T-cell (primary cell): ENCODE measurements at regions of chr1 and their contacts with region 1.

Region 1: GRCh38 chr1:9784508-9785133 is 39.1 kb downstream of the CLSTN1 start:
- DNase-seq: peak; percentile 28 to 86 (median 60)
- ATAC-seq: peak in 3 of 4 experiments; percentile 21 to 56 (median 38)
- H3K4me3 ChIP-seq: no peak overlapping the region
- H3K4me3 Mint-ChIP-seq: no peak overlapping the region
- H3K27ac ChIP-seq: no peak overlapping the region
- H3K27ac Mint-ChIP-seq: peak overlapping the region in 1 of 2 donors; percentile 23
- H3K4me1 ChIP-seq: peaks cover 9 to 29% of the 10 kb centered on the region in 2 experiments
- H3K4me1 Mint-ChIP-seq: peaks cover 35 to 45% (median 40%) of the 10 kb centered on the region in 3 donors
- H3K27me3 ChIP-seq: no peaks in the 10 kb centered on the region
- H3K27me3 Mint-ChIP-seq: no peaks in the 10 kb centered on the region

Region 2: GRCh38 chr1:9651565-9652378 is 132.8 kb before region 1 on chr1 and contains the start of gene PIK3CD:
- CTCF ChIA-PET with region 1: interaction called in 1 of 2 experiments, 10 read pairs
- POLR2A ChIA-PET with region 1: no interaction called
- DNase-seq: peak in 23 of 35 experiments; percentile 3 to 66 (median 43)
- ATAC-seq: peak; percentile 34 to 55 (median 50)
- H3K4me3 ChIP-seq: peak within 1 kb of the TSS; percentile 70 to 82
- H3K4me3 Mint-ChIP-seq: peak within 1 kb of the TSS; percentile 97 to 100 (median 100)
- H3K27ac ChIP-seq: peak within 1 kb of the TSS; percentile 58
- H3K27ac Mint-ChIP-seq: peak within 1 kb of the TSS; percentile 98 to 99
- H3K4me1 ChIP-seq: peaks cover 6 to 77% of the 10 kb centered on the region in 2 experiments
- H3K4me1 Mint-ChIP-seq: peaks cover 73 to 76% (median 73%) of the 10 kb centered on the region in 3 donors
- H3K27me3 ChIP-seq: no peaks in the 10 kb centered on the region
- H3K27me3 Mint-ChIP-seq: no peaks in the 10 kb centered on the region
- total RNA-seq, gene PIK3CD: 246 to 313 (median 280) TPM

Region 3: GRCh38 chr1:9798236-9799130 is 13.9 kb after region 1 on chr1:
- CTCF ChIA-PET with region 1: interaction called in 1 of 2 experiments, 12 read pairs
- POLR2A ChIA-PET with region 1: interaction called in 1 of 2 experiments, 3 read pairs
- DNase-seq: no peak
- ATAC-seq: no peak
- H3K4me3 ChIP-seq: no peak overlapping the region
- H3K4me3 Mint-ChIP-seq: peak overlapping the region; percentile 7 to 74 (median 18)
- H3K27ac ChIP-seq: no peak overlapping the region
- H3K27ac Mint-ChIP-seq: peak overlapping the region; percentile 41 to 68
- H3K4me1 ChIP-seq: peaks cover 0 to 47% of the 10 kb centered on the region in 2 experiments
- H3K4me1 Mint-ChIP-seq: peaks cover 71 to 79% (median 77%) of the 10 kb centered on the region in 3 donors
- H3K27me3 ChIP-seq: no peaks in the 10 kb centered on the region
- H3K27me3 Mint-ChIP-seq: no peaks in the 10 kb centered on the region

Region 4: DNA sequence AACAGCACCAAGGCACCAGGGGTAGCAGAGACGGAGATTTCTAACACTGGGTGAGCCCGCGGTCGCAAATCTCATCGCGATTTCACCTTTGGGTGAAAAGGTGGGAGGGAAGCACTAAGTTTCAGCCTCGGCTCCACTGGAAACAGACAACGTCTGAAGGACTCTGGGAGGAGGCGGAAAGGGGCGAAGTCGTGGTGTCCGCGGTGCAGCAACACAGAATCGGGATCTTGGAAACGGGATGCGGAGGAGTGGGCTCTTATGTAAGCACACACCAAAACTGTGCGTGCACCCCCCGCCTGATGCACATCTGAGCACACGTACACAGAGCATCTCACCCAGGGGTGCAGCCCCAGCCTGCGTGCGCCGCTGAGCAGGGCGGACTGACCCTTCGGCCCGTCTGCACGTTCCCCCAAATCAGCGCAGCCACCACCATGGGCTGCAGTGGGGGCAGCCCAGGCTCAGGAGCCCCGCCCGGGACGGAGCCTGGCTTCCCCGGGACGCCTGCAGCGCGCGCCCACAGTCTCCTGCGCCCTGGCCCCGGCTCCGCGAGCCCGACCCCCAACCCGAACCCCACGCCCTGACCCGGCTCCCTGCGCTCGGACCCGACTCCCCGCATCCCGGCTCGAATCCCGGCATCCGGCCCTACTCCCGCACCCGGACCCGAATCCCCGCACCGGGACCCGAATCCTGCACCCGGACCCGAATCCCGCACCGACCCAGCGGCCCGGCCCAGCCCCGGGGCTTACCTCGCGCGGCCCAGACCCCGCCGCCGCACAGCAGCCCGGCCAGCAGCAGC is 38.5 kb after region 1 on chr1:
- CTCF ChIA-PET with region 1: interaction called in 1 of 2 experiments, 12 read pairs
- POLR2A ChIA-PET with region 1: interaction called, 3 to 4 read pairs
- DNase-seq: peak in 14 of 35 experiments; percentile 9 to 46 (median 18)
- ATAC-seq: peak; percentile 4 to 27 (median 10)
- H3K4me3 ChIP-seq: peak overlapping the region; percentile 85 to 90
- H3K4me3 Mint-ChIP-seq: peak overlapping the region; percentile 92 to 97 (median 93)
- H3K27ac ChIP-seq: no peak overlapping the region
- H3K27ac Mint-ChIP-seq: peak overlapping the region; percentile 86 to 89
- H3K4me1 ChIP-seq: peaks cover 17 to 37% of the 10 kb centered on the region in 2 experiments
- H3K4me1 Mint-ChIP-seq: peaks cover 37 to 63% (median 48%) of the 10 kb centered on the region in 3 donors
- H3K27me3 ChIP-seq: no peaks in the 10 kb centered on the region
- H3K27me3 Mint-ChIP-seq: no peaks in the 10 kb centered on the region

Region 5: DNA sequence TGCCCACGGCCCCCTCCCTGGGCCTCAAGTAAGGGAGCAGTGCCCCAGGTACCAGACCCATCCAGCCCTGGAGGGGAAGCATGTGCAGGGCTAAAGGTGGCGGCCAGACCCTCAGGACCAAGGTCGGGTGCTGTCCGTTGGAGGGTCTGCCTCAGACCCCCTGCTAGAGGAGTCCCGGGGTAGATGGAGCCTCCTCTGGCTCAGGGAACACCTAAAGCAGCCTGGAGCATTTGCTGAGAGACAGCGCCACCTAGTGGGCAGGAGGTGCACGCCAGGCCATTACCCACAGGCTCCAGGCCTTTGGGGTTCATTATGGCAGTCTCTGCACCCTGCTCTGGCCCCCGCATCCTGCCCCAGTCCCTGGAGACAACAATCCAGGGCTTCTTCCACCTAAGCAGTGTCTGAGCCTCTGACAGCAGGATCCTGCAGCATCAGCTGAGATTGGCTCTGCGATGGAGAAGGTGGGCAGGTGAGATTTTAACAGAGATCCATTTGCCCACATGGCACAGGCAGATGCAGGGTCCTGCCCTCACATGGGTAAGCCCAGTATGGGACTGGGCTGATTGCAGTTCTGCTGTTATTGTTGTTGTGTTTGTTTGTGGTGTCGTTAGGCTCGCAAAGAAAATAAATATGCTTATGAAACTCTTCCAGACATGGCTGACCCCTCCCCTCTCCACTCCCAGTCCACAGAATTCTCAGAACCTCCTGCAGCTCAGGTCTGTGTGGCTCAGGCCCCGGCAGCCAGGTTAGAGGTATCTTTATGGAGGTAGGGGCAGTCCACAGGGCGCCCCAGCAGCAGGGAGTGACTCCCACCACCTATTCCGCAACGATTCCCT is 83.0 kb after region 1 on chr1:
- CTCF ChIA-PET with region 1: interaction called, 22 to 29 read pairs
- POLR2A ChIA-PET with region 1: no interaction called
- DNase-seq: peak; percentile 63 to 93 (median 84)
- ATAC-seq: peak; percentile 95 to 99 (median 98)
- H3K4me3 ChIP-seq: no peak overlapping the region
- H3K4me3 Mint-ChIP-seq: no peak overlapping the region
- H3K27ac ChIP-seq: no peak overlapping the region
- H3K27ac Mint-ChIP-seq: no peak overlapping the region
- H3K4me1 ChIP-seq: peaks cover 0 to 7% of the 10 kb centered on the region in 2 experiments
- H3K4me1 Mint-ChIP-seq: peaks cover 2 to 9% (median 4%) of the 10 kb centered on the region in 3 donors
- H3K27me3 ChIP-seq: no peaks in the 10 kb centered on the region
- H3K27me3 Mint-ChIP-seq: no peaks in the 10 kb centered on the region

Region 6: DNA sequence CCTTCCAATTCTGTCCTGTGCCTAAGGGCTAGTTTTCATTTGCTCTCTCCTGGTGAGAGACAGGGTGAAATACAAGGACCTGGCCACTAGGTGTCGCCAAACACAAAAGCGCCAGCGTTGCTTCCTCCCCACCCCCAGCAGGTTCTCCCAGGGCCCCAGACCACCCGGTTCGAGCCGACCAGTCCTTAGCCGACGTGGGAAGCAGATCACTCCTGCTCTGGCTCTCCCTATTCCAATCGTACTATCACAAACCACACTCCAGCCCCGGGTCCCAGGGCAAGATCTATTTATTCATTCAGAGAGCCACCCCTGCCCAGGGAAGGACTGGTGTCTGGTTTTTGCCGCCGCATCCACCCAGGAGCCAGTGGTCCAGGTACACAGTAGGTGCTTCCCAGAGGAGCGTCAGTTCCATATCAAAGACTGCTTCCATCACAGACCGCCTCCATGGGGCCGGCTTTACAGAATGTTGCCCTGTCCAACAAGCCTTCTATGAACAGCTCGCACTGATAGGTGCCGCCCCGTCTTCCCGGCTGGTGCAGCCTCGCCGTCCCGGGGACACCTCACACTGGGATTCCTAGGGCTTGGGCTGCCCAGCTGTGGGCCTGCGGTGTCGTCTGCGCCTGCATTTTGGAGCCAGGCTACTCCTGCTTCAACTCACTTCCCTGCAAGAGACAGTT is 90.5 kb after region 1 on chr1:
- CTCF ChIA-PET with region 1: interaction called, 3 to 10 read pairs
- POLR2A ChIA-PET with region 1: no interaction called
- DNase-seq: peak; percentile 27 to 87 (median 65)
- ATAC-seq: peak; percentile 87 to 97 (median 92)
- H3K4me3 ChIP-seq: no peak overlapping the region
- H3K4me3 Mint-ChIP-seq: no peak overlapping the region
- H3K27ac ChIP-seq: no peak overlapping the region
- H3K27ac Mint-ChIP-seq: no peak overlapping the region
- H3K4me1 ChIP-seq: peaks cover 0 to 8% of the 10 kb centered on the region in 2 experiments
- H3K4me1 Mint-ChIP-seq: peaks cover 4 to 9% (median 5%) of the 10 kb centered on the region in 3 donors
- H3K27me3 ChIP-seq: no peaks in the 10 kb centered on the region
- H3K27me3 Mint-ChIP-seq: no peaks in the 10 kb centered on the region